ENCODE measurements at regions of chr10 and their contacts with region 1.

Region 1: GRCh38 chr10:112995121-112995905 is 45.3 kb downstream of the TCF7L2 start:
- DNase-seq: no peak
- ATAC-seq: no peak
- H3K4me3 ChIP-seq: no peak overlapping the region
- H3K27ac ChIP-seq: peak overlapping the region; percentile 42; the same call in 1 of the 2 replicates
- H3K4me1 ChIP-seq: peaks cover 60% of the 10 kb centered on the region
- H3K27me3 ChIP-seq: no peaks in the 10 kb centered on the region
- CTCF ChIP-seq: no peak

Region 2: GRCh38 chr10:112389147-112389822 is 606.0 kb before region 1 on chr10:
- CTCF ChIA-PET with region 1: no interaction called
- POLR2A ChIA-PET with region 1: no interaction called
- in situ Hi-C with region 1: no loop called
- intact Hi-C with region 1: no loop called
- DNase-seq: peak; percentile 38
- ATAC-seq: peak; percentile 78
- H3K4me3 ChIP-seq: no peak overlapping the region
- H3K27ac ChIP-seq: no peak overlapping the region
- H3K4me1 ChIP-seq: no peaks in the 10 kb centered on the region
- H3K27me3 ChIP-seq: peaks cover 10% of the 10 kb centered on the region
- CTCF ChIP-seq: no peak

Region 3: GRCh38 chr10:112721080-112721698 is 274.1 kb before region 1 on chr10:
- CTCF ChIA-PET with region 1: no interaction called
- POLR2A ChIA-PET with region 1: no interaction called
- in situ Hi-C with region 1: no loop called
- intact Hi-C with region 1: no loop called
- DNase-seq: peak; percentile 43
- ATAC-seq: no peak
- H3K4me3 ChIP-seq: no peak overlapping the region
- H3K27ac ChIP-seq: peak overlapping the region; percentile 52
- H3K4me1 ChIP-seq: peaks cover 16% of the 10 kb centered on the region
- H3K27me3 ChIP-seq: no peaks in the 10 kb centered on the region
- CTCF ChIP-seq: peak; percentile 78

Region 4: DNA sequence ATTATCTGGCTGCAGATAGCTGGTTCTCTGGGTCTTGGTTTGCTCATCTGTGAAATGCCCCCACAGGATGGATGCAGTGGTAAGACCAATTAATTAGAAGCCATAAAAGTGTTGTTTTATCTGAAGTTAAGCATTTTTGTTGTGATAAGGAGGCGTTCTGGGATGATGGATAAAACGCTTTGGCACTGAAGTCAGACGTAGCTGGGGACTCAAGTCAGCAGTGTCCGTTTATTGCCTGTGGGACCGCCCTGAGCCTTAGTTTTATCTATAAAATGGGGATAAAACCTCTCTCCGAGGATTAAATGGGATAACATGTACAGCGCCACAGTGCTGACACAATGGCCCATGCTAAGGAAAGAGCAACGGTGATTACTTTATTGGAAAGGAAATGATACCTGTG is 10.6 kb before region 1 on chr10:
- CTCF ChIA-PET with region 1: no interaction called
- POLR2A ChIA-PET with region 1: interaction called, 17 read pairs
- in situ Hi-C with region 1: no loop called
- intact Hi-C with region 1: no loop called
- DNase-seq: no peak
- ATAC-seq: no peak
- H3K4me3 ChIP-seq: no peak overlapping the region
- H3K27ac ChIP-seq: peak overlapping the region; percentile 48
- H3K4me1 ChIP-seq: peaks cover 73% of the 10 kb centered on the region
- H3K27me3 ChIP-seq: no peaks in the 10 kb centered on the region
- CTCF ChIP-seq: no peak